ENCODE measurements at regions of chr11 and their contacts with region 1.

Region 1: DNA sequence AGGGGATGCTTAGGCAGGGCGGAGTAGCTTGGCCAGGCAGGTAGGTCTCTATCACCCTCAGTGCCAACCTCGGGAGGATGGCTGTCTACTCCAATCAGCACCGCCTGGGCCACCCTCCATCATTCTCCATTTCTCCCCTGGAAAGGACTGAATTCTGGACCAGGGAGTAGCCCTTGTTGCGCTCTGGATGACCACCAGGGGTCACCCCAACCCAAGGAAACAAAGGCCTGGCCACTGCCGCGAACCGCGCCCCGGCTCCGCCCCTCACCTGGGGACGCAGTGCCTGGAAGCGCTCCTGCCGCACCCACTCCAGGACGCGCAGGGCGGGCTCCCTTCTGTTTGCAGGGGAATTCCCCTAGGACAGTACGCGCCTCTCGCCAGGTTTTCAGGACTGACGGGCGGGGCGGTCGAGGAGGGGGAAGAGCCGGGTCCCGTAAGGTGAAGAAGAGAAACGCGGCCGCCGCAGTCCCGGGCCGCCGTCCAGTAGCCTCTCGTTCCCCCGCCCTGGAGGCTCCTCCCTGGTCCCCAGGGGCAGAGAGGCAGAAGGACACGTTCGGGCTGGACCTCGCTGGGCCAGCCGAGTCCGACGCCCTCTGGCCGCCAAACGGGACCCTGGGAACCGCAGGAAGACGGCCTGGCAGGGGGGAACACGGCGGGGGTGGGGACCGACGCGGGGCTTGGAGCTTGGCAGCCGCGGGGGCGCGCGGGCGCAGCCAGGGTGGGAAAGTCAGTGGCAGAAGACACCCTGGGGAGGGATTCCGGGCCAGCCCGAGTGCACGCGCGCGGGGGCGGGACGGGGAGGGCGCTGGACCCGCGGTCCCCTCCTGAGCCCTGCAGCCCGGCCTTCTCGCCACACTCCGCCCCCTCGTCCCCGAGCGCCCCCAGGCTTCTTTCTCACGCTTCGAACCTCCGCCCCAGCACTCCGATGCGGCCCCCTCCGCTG is 7.1 kb downstream of the SCN4B start:
- DNase-seq: peak; percentile 90
- H3K4me3 Mint-ChIP-seq: peak overlapping the region; percentile 74
- H3K27ac Mint-ChIP-seq: no peak overlapping the region
- H3K4me1 Mint-ChIP-seq: peaks cover 11% of the 10 kb centered on the region
- H3K27me3 Mint-ChIP-seq: peaks cover 73% of the 10 kb centered on the region

Region 2: DNA sequence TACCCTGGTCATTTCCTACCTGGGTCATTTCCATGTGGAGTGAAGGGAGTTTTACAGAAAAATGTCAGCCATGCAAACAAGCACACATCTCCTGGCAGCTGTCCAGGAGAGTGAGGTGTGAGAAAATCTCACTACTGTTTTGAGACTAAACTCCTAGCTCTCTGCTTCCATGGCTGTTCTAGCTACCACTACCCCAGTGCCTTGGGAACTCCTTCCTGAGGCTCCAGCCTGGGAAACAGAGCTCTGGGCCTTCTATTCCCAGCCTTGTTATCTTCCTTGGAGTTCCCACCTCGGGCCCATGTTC is 213.5 kb before region 1 on chr11:
- CTCF ChIA-PET with region 1: no interaction called
- POLR2A ChIA-PET with region 1: no interaction called
- DNase-seq: no peak
- H3K4me3 Mint-ChIP-seq: no peak overlapping the region
- H3K27ac Mint-ChIP-seq: peak overlapping the region; percentile 55
- H3K4me1 Mint-ChIP-seq: peaks cover 51% of the 10 kb centered on the region
- H3K27me3 Mint-ChIP-seq: peaks cover 11% of the 10 kb centered on the region

Region 3: GRCh38 chr11:118117790-118118601 is 27.6 kb before region 1 on chr11:
- CTCF ChIA-PET with region 1: no interaction called
- POLR2A ChIA-PET with region 1: no interaction called
- DNase-seq: no peak
- H3K4me3 Mint-ChIP-seq: no peak overlapping the region
- H3K27ac Mint-ChIP-seq: no peak overlapping the region
- H3K4me1 Mint-ChIP-seq: peaks cover 13% of the 10 kb centered on the region
- H3K27me3 Mint-ChIP-seq: peaks cover 22% of the 10 kb centered on the region

Region 4: DNA sequence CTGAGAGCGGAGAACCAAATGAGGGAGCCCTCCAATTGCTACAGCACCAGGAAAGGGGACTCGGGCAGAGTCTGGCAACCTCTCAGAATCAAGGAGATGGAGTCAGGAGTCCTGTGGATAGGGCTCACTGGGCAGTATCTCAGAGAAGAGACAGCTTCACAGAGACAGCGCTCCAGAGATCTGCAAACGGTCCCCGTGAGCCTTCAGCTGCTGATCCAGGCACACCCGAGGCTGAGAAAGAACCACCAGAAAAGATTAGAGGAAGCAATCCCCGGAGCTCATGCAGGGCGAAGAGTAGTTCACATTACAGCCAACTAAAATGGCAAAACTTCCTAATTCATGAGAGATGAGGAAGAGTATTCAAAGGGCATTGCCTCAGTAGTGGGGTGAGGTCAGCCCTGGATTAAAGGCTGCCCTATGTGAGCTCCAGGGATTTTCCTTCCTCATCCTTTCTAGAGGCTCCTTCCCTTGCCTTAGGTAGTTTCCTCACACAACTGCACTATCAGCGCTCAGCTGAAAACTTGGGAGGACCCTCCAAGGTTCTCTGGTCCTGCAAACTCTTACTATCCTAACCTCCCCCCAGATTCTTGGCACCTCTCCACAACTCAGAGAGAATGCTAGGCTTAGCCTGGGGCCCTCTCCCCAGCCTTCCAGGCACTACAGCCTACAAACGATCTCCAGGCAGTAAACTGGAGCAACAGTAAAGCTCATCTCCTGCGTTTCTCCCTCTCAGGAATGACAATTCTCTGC is 16.7 kb before region 1 on chr11:
- CTCF ChIA-PET with region 1: interaction called, 13 read pairs
- POLR2A ChIA-PET with region 1: no interaction called
- DNase-seq: no peak
- H3K4me3 Mint-ChIP-seq: no peak overlapping the region
- H3K27ac Mint-ChIP-seq: no peak overlapping the region
- H3K4me1 Mint-ChIP-seq: no peaks in the 10 kb centered on the region
- H3K27me3 Mint-ChIP-seq: peaks cover 9% of the 10 kb centered on the region

Region 5: GRCh38 chr11:118171269-118172062 is 25.9 kb after region 1 on chr11:
- CTCF ChIA-PET with region 1: interaction called, 32 read pairs
- POLR2A ChIA-PET with region 1: interaction called, 5 read pairs
- DNase-seq: peak; percentile 84
- H3K4me3 Mint-ChIP-seq: no peak overlapping the region
- H3K27ac Mint-ChIP-seq: no peak overlapping the region
- H3K4me1 Mint-ChIP-seq: peaks cover 5% of the 10 kb centered on the region
- H3K27me3 Mint-ChIP-seq: peaks cover 16% of the 10 kb centered on the region

Region 6: GRCh38 chr11:118227865-118228785 is 82.6 kb after region 1 on chr11:
- CTCF ChIA-PET with region 1: no interaction called
- POLR2A ChIA-PET with region 1: no interaction called
- DNase-seq: peak; percentile 50
- H3K4me3 Mint-ChIP-seq: peak overlapping the region; percentile 36
- H3K27ac Mint-ChIP-seq: no peak overlapping the region
- H3K4me1 Mint-ChIP-seq: peaks cover 48% of the 10 kb centered on the region
- H3K27me3 Mint-ChIP-seq: no peaks in the 10 kb centered on the region

Region 7: DNA sequence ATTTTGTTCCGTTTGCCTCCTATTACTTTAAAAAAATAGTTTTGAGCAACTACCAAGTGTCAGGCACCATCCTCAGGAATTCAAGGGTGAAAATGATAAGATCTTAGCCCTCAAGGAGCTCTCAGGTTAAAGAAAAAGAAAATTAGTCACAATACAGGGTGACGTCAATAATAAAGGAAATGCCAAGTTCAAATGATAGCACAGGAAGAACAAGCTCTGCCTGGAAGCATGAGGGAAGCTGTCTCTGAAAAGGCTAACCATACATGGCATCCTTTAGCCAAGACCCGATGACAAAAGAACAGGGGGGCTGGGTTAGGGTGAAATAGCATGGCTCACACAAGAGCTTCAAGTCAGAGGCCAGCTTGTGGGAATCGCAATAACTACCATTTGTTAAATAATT is 129.6 kb after region 1 on chr11:
- CTCF ChIA-PET with region 1: no interaction called
- POLR2A ChIA-PET with region 1: no interaction called
- DNase-seq: no peak
- H3K4me3 Mint-ChIP-seq: no peak overlapping the region
- H3K27ac Mint-ChIP-seq: no peak overlapping the region
- H3K4me1 Mint-ChIP-seq: peaks cover 32% of the 10 kb centered on the region
- H3K27me3 Mint-ChIP-seq: peaks cover 2% of the 10 kb centered on the region

Measured in activated CD4-positive, alpha-beta T cell treated with anti-CD3 and anti-CD28 coated beads, Interleukin-2, amount 10 ng/mL, durations not matched to agents 7 days and 5 days (primary cell).